ENCODE measurements at regions of chr10 and their contacts with region 1.

Region 1: GRCh38 chr10:78972947-78973900 is 95.5 kb upstream of the ZMIZ1 start:
- DNase-seq: peak; percentile 73
- H3K4me3 Mint-ChIP-seq: peak overlapping the region; percentile 70
- H3K27ac Mint-ChIP-seq: peak overlapping the region; percentile 81
- H3K4me1 Mint-ChIP-seq: peaks cover 42% of the 10 kb centered on the region
- H3K27me3 Mint-ChIP-seq: peaks cover 19% of the 10 kb centered on the region

Region 2: GRCh38 chr10:78029269-78030226 is 943.7 kb before region 1 on chr10 and contains the start of gene POLR3A:
- intact Hi-C with region 1: loop called (anchors 5 kb)
- DNase-seq: peak; percentile 89
- H3K4me3 Mint-ChIP-seq: peak within 1 kb of the TSS; percentile 99
- H3K27ac Mint-ChIP-seq: peak within 1 kb of the TSS; percentile 91
- H3K4me1 Mint-ChIP-seq: peaks cover 28% of the 10 kb centered on the region
- H3K27me3 Mint-ChIP-seq: no peaks in the 10 kb centered on the region
- total RNA-seq, gene POLR3A: 29.5 and 30.8 TPM in 2 replicates

Region 3: DNA sequence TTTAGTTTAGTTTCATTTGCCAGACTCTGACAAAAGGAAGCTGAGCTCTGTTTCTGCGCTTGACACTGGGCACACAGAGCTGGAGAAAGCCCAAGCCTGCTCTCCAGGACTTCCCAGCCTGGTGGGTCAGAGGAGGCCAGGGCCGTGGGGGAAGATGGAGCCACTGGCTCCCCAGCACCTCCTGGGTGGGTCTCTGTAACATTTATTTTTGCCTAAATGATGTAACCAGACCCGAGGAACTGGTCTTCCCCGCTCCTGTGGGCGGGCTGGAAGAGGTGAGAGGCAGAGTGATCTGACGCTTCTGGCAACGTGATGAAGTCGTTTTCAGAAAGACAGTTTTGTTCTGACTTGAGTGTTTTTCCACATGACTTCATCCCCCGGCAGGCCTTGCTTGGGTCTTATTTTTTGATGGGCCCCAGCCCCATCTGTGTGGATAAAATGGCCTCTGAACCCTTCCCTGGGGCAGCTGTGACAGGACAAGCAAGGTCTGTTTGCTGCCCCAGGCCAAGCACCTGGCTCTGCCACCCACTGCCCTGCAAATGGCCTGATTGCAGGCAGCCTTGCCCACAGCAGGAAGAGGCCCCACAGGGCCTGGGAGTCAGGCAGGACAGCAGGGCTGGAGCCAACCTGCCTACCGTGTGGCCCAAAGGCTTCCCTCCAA is 209.4 kb before region 1 on chr10:
- intact Hi-C with region 1: loop called (anchors 1 kb)
- DNase-seq: no peak
- H3K4me3 Mint-ChIP-seq: peak overlapping the region; percentile 3
- H3K27ac Mint-ChIP-seq: peak overlapping the region; percentile 85
- H3K4me1 Mint-ChIP-seq: peaks cover 27% of the 10 kb centered on the region
- H3K27me3 Mint-ChIP-seq: no peaks in the 10 kb centered on the region

Region 4: DNA sequence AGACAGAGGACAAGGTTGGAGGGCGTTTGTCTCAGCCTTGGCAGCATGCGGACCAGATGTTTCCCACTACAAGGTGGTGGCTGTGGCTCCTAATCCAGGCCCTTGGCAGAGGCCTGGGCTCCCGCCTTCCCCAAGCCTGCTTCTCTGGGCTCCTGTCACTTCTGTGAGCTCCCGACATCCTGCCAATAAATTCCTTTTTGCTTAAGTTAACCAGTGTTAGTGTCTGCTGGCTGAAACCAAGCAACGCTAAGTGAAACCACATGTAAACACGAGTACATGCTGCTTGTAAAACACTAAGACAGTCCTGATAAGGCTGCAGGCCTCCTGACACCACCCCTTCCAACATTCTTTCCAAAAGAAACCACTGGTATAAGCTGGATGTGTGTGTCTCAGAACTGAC is 168.0 kb before region 1 on chr10:
- intact Hi-C with region 1: no loop called
- DNase-seq: no peak
- H3K4me3 Mint-ChIP-seq: no peak overlapping the region
- H3K27ac Mint-ChIP-seq: no peak overlapping the region
- H3K4me1 Mint-ChIP-seq: no peaks in the 10 kb centered on the region
- H3K27me3 Mint-ChIP-seq: peaks cover 8% of the 10 kb centered on the region

Region 5: DNA sequence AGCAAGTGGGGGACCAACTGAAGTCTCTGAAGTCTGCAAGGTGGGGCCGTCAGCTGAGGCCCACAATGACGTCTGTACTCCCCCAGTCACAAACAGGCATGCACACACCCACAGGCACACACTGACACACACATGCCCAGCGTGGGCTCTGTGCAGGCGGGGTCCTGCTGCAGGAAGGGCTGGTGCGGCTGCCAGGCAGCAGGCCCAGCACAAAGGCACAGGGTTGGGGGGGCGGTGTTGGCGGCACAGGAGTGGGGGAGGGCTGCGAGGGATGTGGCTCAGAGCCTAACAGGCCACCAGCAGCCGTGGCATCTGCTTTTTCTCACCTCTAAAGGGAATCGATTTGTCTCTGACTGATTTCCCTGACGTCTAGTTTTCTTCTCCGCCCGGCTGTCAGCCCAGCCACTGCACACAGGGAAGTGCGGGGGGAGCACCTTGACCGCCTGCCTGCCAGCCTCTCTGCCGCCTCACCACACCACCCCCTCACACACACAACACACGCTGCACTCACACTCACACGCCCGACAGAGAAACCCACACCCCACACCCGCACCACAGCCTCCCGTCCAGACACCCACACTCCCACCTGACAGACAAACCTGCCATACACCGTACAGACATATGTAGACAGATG is 52.1 kb after region 1 on chr10:
- intact Hi-C with region 1: loop called (anchors 5 kb)
- DNase-seq: no peak
- H3K4me3 Mint-ChIP-seq: no peak overlapping the region
- H3K27ac Mint-ChIP-seq: no peak overlapping the region
- H3K4me1 Mint-ChIP-seq: peaks cover 18% of the 10 kb centered on the region
- H3K27me3 Mint-ChIP-seq: peaks cover 4% of the 10 kb centered on the region

Region 6: DNA sequence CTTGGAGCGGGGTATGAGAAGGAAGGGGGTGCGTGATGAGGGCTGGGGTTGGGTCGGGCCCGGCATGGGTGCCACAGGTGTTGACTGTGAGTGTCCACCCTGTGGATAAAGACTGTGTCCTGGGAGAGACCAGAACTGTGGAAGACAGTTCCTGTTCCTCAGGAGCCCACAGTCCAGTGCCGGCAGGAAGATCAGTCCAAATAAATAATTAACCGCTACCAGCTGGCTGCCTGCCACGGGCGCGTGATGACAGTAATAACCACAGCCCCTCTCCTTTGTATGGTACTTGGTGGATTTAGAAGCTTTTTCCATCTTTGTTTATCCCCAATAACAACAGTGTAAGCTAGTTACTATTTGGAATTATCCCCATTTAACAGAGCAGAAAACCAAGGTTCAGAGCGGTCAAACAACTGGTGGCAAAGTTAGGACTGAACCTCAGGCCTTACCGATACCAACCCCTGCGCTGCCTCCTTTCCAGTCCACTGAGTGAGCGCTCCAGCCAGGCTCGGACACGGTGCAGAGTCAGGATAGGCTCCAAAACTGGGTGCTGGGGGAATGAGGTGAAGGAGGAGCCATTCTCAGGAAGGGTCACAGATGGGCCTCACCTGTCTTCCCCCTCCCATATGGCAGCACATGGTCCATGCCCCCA is 100.7 kb after region 1 on chr10:
- intact Hi-C with region 1: no loop called
- DNase-seq: no peak
- H3K4me3 Mint-ChIP-seq: no peak overlapping the region
- H3K27ac Mint-ChIP-seq: no peak overlapping the region
- H3K4me1 Mint-ChIP-seq: peaks cover 12% of the 10 kb centered on the region
- H3K27me3 Mint-ChIP-seq: peaks cover 18% of the 10 kb centered on the region

Region 7: GRCh38 chr10:79195091-79195923 is 222.1 kb after region 1 on chr10:
- intact Hi-C with region 1: loop called (anchors 2 kb)
- DNase-seq: peak; percentile 67
- H3K4me3 Mint-ChIP-seq: no peak overlapping the region
- H3K27ac Mint-ChIP-seq: no peak overlapping the region
- H3K4me1 Mint-ChIP-seq: peaks cover 6% of the 10 kb centered on the region
- H3K27me3 Mint-ChIP-seq: peaks cover 3% of the 10 kb centered on the region

Region 8: DNA sequence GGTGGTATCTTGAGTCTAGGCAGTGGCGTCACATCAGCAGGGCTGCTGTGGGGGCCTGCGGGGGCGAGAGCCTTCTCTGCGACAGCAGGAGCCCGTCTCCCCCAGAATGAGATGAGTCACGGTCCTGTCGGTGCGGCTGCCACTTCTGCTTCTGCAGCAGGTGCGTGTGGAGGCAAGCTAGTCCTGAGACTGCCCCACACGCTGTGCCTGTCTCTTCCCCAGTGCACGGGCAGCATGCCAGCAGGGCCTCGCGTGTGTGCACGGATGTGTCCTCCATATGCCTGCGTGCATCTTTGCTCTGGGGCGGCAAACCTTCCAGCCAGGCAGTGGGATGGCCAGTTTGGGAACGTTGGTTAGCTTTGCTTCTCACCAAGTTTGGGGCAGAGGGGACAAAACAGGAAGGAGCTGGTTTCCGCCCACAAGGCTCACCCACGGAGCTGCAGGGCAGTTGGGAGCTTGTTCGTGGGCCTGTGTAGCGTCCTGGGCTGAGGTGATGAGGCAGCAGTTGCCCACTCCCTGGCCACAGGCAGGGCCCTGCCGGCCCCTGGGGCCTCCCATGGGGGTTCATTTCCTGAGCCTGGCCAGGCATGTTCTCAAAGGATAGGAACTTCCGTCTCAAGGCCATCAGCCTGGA is 313.2 kb after region 1 on chr10:
- intact Hi-C with region 1: loop called (anchors 2 kb)
- DNase-seq: peak; percentile 65
- H3K4me3 Mint-ChIP-seq: peak overlapping the region; percentile 71
- H3K27ac Mint-ChIP-seq: peak overlapping the region; percentile 89
- H3K4me1 Mint-ChIP-seq: peaks cover 61% of the 10 kb centered on the region
- H3K27me3 Mint-ChIP-seq: no peaks in the 10 kb centered on the region

Region 9: GRCh38 chr10:79445141-79445976 is 472.1 kb after region 1 on chr10 and contains the start of gene ZCCHC24:
- intact Hi-C with region 1: loop called (anchors 5 kb)
- DNase-seq: peak; percentile 91
- H3K4me3 Mint-ChIP-seq: peak within 1 kb of the TSS; percentile 87
- H3K27ac Mint-ChIP-seq: peak within 1 kb of the TSS; percentile 68
- H3K4me1 Mint-ChIP-seq: peaks cover 21% of the 10 kb centered on the region
- H3K27me3 Mint-ChIP-seq: peaks cover 56% of the 10 kb centered on the region
- total RNA-seq, gene ZCCHC24: 0.52 and 0.59 TPM in 2 replicates